Upper lobe of right lung (tissue), 1 donor: ENCODE measurements at regions of chr15 and their contacts with region 1.

Region 1: GRCh38 chr15:92992720-92993119 is 92.6 kb downstream of the CHD2 start:
- DNase-seq: no peak
- ATAC-seq: no peak
- H3K4me3 ChIP-seq: no peak overlapping the region
- H3K27ac ChIP-seq: no peak overlapping the region
- H3K4me1 ChIP-seq: no peaks in the 10 kb centered on the region
- H3K27me3 ChIP-seq: no peaks in the 10 kb centered on the region
- CTCF ChIP-seq: no peak

Region 2: DNA sequence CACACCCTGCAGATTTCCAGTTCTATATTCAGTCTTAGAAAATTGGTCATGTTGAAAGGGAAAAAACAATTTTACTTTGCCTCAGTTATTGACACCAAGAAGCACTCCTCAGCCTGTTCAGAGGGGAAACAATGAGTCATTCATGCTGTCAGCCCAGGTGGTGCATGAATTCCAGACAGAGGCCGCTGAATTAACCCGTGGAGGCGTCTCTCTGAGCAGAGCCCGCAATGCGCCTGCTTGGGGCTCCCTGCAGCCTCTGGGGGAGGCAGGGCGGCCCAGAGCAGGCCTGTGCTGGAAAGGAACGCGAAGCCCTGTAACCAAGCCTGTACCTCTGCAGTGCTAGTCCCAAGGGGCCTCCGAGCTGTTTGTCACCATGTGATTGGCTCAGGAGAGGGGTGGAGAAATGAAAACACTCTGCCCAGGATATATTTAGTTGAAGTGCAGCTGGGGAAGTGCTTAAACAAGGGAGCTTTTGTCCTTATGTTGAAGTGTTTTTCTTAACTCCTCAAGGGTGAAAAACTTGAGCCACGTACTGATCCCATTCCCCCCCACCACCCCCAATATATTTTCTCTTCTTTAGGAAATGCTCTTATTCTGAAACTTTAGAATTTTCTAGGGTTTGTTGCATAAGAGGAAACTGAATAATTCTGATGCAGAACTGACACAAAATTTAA is 160.9 kb before region 1 on chr15:
- intact Hi-C with region 1: no loop called
- DNase-seq: peak; percentile 94
- ATAC-seq: peak; percentile 99
- H3K4me3 ChIP-seq: peak overlapping the region; percentile 34
- H3K27ac ChIP-seq: peak overlapping the region; percentile 90
- H3K4me1 ChIP-seq: peaks cover 31% of the 10 kb centered on the region
- H3K27me3 ChIP-seq: no peaks in the 10 kb centered on the region
- CTCF ChIP-seq: no peak

Region 3: DNA sequence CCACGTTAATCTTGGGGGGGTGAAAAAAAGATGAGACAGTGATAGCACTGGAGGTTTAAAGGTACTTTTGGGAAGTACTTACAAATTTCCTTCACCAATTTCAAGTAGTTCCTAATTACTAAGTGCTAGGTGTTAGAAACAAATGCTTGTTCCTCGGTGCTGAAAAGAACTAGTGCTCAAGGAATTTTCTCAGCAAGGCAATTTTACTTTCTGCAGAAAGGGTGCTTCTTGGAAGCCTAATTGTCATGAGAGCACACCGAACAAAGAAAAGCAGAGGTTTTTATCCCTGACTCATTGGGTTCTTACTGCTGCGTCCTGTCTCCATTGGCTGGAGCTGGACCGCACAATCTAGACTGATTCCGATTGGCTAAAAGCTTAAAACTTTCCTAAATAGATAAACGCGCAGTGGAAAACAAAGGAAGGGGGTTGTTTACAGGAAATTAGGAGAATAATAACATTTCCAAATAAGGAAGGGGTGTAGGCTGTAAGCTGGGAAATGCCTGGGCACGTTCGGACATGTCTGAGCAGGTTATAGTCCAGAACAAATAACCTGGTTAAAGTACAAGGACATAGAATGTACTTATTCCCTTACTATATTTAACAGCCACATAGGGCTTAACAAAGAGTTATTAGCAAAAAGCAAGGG is 43.0 kb before region 1 on chr15:
- intact Hi-C with region 1: loop called (anchors 10 kb)
- DNase-seq: no peak
- ATAC-seq: no peak
- H3K4me3 ChIP-seq: no peak overlapping the region
- H3K27ac ChIP-seq: no peak overlapping the region
- H3K4me1 ChIP-seq: no peaks in the 10 kb centered on the region
- H3K27me3 ChIP-seq: no peaks in the 10 kb centered on the region
- CTCF ChIP-seq: no peak